Activated CD8-positive, alpha-beta T cell treated with anti-CD3 and anti-CD28 coated beads for 36 hours (primary cell): ENCODE measurements at regions of chr4 and their contacts with region 1.

Region 1: DNA sequence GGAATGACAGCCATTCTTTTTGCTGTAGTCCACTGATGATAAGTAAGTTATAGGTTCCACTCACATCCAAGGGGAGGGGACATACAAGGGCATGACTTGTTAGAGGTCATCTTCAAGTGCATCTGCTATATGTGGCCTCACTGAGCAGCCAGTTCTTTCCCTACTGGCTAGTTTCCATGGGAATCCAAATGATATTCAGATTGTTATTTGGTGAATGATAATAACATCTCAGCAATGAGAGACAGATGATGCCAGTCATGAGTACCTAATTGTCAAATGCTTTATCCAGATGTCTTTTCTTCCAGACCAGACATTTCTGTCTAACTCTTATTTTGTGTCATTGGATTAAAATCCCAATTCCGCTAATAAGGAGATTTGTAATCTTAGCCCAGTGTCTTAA is 460.4 kb upstream of the BOD1L1 start:
- DNase-seq: no peak
- ATAC-seq: no peak
- H3K4me3 Mint-ChIP-seq: no peak overlapping the region
- H3K27ac Mint-ChIP-seq: no peak overlapping the region
- H3K4me1 Mint-ChIP-seq: no peaks in the 10 kb centered on the region
- H3K27me3 Mint-ChIP-seq: no peaks in the 10 kb centered on the region
- CTCF ChIP-seq: no peak

Region 2: DNA sequence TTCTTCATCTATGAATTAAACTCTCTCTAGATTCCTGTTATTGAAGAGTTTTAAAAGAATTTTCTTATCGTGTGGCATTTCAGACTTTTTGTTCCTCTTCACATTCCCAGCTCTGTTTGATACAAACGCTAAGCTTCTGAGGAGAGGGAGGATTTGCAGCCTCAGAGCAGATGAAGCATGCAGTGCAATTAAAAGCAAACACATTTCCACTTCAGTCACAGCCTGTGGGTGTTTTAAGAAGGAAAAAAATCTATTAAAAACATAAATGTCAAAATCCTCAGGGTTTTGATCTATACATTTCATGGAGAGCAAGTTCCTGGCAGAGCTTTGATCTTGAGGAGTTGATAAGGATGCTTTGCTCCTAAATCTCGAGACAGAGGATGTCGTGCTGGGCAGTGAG is 18.0 kb before region 1 on chr4:
- CTCF ChIA-PET with region 1: no interaction called
- POLR2A ChIA-PET with region 1: no interaction called
- intact Hi-C with region 1: no loop called
- DNase-seq: no peak
- ATAC-seq: no peak
- H3K4me3 Mint-ChIP-seq: no peak overlapping the region
- H3K27ac Mint-ChIP-seq: no peak overlapping the region
- H3K4me1 Mint-ChIP-seq: no peaks in the 10 kb centered on the region
- H3K27me3 Mint-ChIP-seq: no peaks in the 10 kb centered on the region
- CTCF ChIP-seq: no peak

Region 3: GRCh38 chr4:14111730-14112181 is 23.8 kb after region 1 on chr4:
- CTCF ChIA-PET with region 1: no interaction called
- POLR2A ChIA-PET with region 1: no interaction called
- intact Hi-C with region 1: loop called (anchors 1 kb)
- DNase-seq: no peak
- ATAC-seq: no peak
- H3K4me3 Mint-ChIP-seq: no peak overlapping the region
- H3K27ac Mint-ChIP-seq: no peak overlapping the region
- H3K4me1 Mint-ChIP-seq: no peaks in the 10 kb centered on the region
- H3K27me3 Mint-ChIP-seq: peaks cover 13% of the 10 kb centered on the region
- CTCF ChIP-seq: no peak